ENCODE measurements at regions of chr1 and their contacts with region 1.

Region 1: GRCh38 chr1:240044620-240045019 is 47.1 kb upstream of the FMN2 start:
- DNase-seq: no peak
- H3K4me3 ChIP-seq: no peak overlapping the region
- H3K4me3 Mint-ChIP-seq: no peak overlapping the region
- H3K27ac Mint-ChIP-seq: no peak overlapping the region
- H3K4me1 ChIP-seq: no peaks in the 10 kb centered on the region
- H3K4me1 Mint-ChIP-seq: no peaks in the 10 kb centered on the region
- H3K27me3 ChIP-seq: no peaks in the 10 kb centered on the region
- H3K27me3 Mint-ChIP-seq: peaks cover 10% of the 10 kb centered on the region
- CTCF ChIP-seq: no peak

Region 2: GRCh38 chr1:240004086-240004749 is 40.4 kb before region 1 on chr1:
- CTCF ChIA-PET with region 1: no interaction called
- POLR2A ChIA-PET with region 1: no interaction called
- intact Hi-C with region 1: loop called (anchors 1 kb)
- DNase-seq: peak in 1 of 2 experiments; percentile 16
- H3K4me3 ChIP-seq: no peak overlapping the region
- H3K4me3 Mint-ChIP-seq: no peak overlapping the region
- H3K27ac Mint-ChIP-seq: no peak overlapping the region
- H3K4me1 ChIP-seq: no peaks in the 10 kb centered on the region
- H3K4me1 Mint-ChIP-seq: no peaks in the 10 kb centered on the region
- H3K27me3 ChIP-seq: no peaks in the 10 kb centered on the region
- H3K27me3 Mint-ChIP-seq: no peaks in the 10 kb centered on the region
- CTCF ChIP-seq: peak; percentile 56 to 75

Region 3: GRCh38 chr1:240136402-240136801 is 91.8 kb after region 1 on chr1:
- CTCF ChIA-PET with region 1: no interaction called
- POLR2A ChIA-PET with region 1: no interaction called
- intact Hi-C with region 1: no loop called
- DNase-seq: no peak
- H3K4me3 ChIP-seq: no peak overlapping the region
- H3K4me3 Mint-ChIP-seq: no peak overlapping the region
- H3K27ac Mint-ChIP-seq: no peak overlapping the region
- H3K4me1 ChIP-seq: no peaks in the 10 kb centered on the region
- H3K4me1 Mint-ChIP-seq: no peaks in the 10 kb centered on the region
- H3K27me3 ChIP-seq: no peaks in the 10 kb centered on the region
- H3K27me3 Mint-ChIP-seq: peaks cover 2% of the 10 kb centered on the region
- CTCF ChIP-seq: no peak

Region 4: DNA sequence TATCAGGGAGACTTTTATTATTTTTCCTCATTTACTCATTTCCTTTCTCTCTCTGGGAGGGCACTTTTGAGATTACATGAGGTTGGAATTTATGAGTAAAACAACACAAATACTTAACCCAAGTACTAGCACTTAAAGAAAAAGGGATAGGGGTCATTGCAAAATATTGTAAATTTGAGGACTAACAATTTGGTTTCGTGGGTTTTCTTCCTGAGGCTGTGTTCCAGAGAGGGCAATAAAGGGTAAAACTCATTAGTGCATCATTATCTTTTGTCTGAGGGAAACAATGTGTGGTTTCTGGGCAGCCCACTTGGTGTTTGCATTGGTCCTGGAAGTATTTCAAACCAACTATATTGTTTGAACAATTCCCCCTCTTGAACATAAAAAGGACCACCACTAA is 470.9 kb after region 1 on chr1:
- CTCF ChIA-PET with region 1: no interaction called
- POLR2A ChIA-PET with region 1: no interaction called
- intact Hi-C with region 1: no loop called
- DNase-seq: no peak
- H3K4me3 ChIP-seq: no peak overlapping the region
- H3K4me3 Mint-ChIP-seq: no peak overlapping the region
- H3K27ac Mint-ChIP-seq: no peak overlapping the region
- H3K4me1 ChIP-seq: no peaks in the 10 kb centered on the region
- H3K4me1 Mint-ChIP-seq: peaks cover 16% of the 10 kb centered on the region
- H3K27me3 ChIP-seq: no peaks in the 10 kb centered on the region
- H3K27me3 Mint-ChIP-seq: no peaks in the 10 kb centered on the region
- CTCF ChIP-seq: no peak

Measured in Caco-2 (cell line).